ENCODE measurements at regions of chrX and their contacts with region 1.

Region 1: DNA sequence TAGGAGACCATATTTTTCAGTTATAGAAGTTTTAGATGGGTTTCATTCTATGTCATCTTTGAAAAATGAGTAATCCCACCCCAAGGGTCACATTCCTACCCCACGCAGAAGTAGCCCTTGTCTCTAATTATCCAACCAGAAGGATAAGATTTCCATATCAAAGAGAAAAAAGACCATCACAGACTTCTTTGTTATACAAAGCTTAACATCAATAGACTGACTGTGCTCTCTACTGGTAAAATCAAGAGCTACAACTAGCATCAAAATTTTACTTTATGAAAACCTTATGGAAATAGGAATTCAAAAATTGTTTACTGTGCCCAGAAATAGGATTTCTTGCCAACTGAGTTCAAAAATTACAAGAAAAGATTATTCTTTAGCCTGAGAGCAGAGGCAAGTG is 24.9 kb downstream of the TNMD start:
- DNase-seq: no peak
- H3K4me3 ChIP-seq: no peak overlapping the region
- H3K27ac ChIP-seq: no peak overlapping the region
- H3K4me1 ChIP-seq: no peaks in the 10 kb centered on the region
- H3K27me3 ChIP-seq: no peaks in the 10 kb centered on the region
- CTCF ChIP-seq: peak in 1 of 3 donors; percentile 21
- EP300 ChIP-seq: no peak
- POLR2A ChIP-seq: no peak

Region 2: DNA sequence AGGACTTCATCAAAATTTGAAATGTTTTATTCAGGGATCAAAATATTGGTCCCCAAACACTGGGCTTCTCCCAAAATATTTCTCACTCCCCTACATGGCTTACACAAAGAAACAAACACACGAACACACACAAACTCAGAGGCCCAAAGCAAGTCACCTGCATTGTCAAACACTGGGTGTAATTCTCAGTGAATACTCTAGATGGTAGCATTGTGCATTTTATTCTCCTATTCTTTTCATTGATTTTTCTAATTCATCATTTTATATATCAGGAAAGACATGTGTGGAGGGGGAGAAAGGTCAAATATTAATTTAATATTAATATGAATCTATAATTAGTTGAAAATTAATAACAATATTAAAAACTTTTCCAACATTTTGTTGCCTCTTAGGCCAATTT is 97.1 kb before region 1 on chrX:
- intact Hi-C with region 1: loop called in 2 of 4 experiments (anchors 5 kb)
- DNase-seq: no peak
- H3K4me3 ChIP-seq: no peak overlapping the region
- H3K27ac ChIP-seq: no peak overlapping the region
- H3K4me1 ChIP-seq: no peaks in the 10 kb centered on the region
- H3K27me3 ChIP-seq: no peaks in the 10 kb centered on the region
- CTCF ChIP-seq: peak; percentile 14 to 51 (median 48)
- EP300 ChIP-seq: no peak
- POLR2A ChIP-seq: no peak

Measured in ovary (tissue), 10 donors.